Endothelial cell of umbilical vein (primary cell): ENCODE measurements at regions of chr2 and their contacts with region 1.

Region 1: GRCh38 chr2:230847883-230848388 is 16.8 kb upstream of the ITM2C start:
- DNase-seq: peak; percentile 78
- H3K4me3 ChIP-seq: no peak overlapping the region
- H3K27ac ChIP-seq: no peak overlapping the region
- H3K4me1 ChIP-seq: no peaks in the 10 kb centered on the region
- H3K27me3 ChIP-seq: peaks cover 7% of the 10 kb centered on the region in 2 experiments
- CTCF ChIP-seq: peak; percentile 96 to 97
- POLR2A ChIP-seq: no peak

Region 2: GRCh38 chr2:230895536-230896345 is 47.8 kb after region 1 on chr2:
- CTCF ChIA-PET with region 1: no interaction called
- POLR2A ChIA-PET with region 1: no interaction called
- dilution Hi-C with region 1: no loop called
- intact Hi-C with region 1: no loop called
- DNase-seq: no peak
- H3K4me3 ChIP-seq: no peak overlapping the region
- H3K27ac ChIP-seq: no peak overlapping the region
- H3K4me1 ChIP-seq: no peaks in the 10 kb centered on the region
- H3K27me3 ChIP-seq: peaks cover 0 to 2% of the 10 kb centered on the region in 2 experiments
- CTCF ChIP-seq: no peak
- POLR2A ChIP-seq: no peak

Region 3: GRCh38 chr2:230913406-230914143 is 65.6 kb after region 1 on chr2:
- CTCF ChIA-PET with region 1: interaction called, 3 read pairs
- POLR2A ChIA-PET with region 1: no interaction called
- dilution Hi-C with region 1: no loop called
- intact Hi-C with region 1: loop called (anchors 1 kb)
- DNase-seq: no peak
- H3K4me3 ChIP-seq: no peak overlapping the region
- H3K27ac ChIP-seq: no peak overlapping the region
- H3K4me1 ChIP-seq: no peaks in the 10 kb centered on the region
- H3K27me3 ChIP-seq: peaks cover 2 to 5% of the 10 kb centered on the region in 2 experiments
- CTCF ChIP-seq: peak; percentile 10 to 25
- POLR2A ChIP-seq: no peak

Region 4: DNA sequence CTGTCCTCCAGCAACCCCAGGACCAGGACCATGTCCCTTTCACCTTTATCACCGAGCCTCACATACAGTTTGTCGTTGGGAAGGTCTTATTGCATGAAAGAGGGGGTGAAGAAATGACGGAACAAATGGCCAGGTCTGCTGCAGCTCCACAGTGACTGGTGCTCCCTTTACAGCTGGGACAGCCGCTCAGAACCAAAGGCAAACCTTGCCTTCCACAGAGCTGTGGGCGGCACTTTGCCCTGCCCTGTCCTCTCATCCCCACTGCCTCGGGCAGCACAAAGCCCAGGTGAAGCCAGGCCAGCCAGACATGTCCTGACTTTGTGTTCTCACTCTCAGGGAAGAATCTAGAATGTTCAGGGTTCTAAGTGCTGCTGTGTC is 76.1 kb after region 1 on chr2:
- CTCF ChIA-PET with region 1: no interaction called
- POLR2A ChIA-PET with region 1: no interaction called
- dilution Hi-C with region 1: no loop called
- intact Hi-C with region 1: no loop called
- DNase-seq: no peak
- H3K4me3 ChIP-seq: no peak overlapping the region
- H3K27ac ChIP-seq: no peak overlapping the region
- H3K4me1 ChIP-seq: no peaks in the 10 kb centered on the region
- H3K27me3 ChIP-seq: peaks cover 0 to 10% of the 10 kb centered on the region in 2 experiments
- CTCF ChIP-seq: no peak
- POLR2A ChIP-seq: no peak